ENCODE measurements at regions of chr5 and their contacts with region 1.

Region 1: GRCh38 chr5:42423285-42424165 is at the start of gene GHR:
- DNase-seq: peak; percentile 84 to 88 (median 85)
- ATAC-seq: peak; percentile 95
- H3K4me3 ChIP-seq: peak within 1 kb of the TSS; percentile 23 to 54
- H3K27ac ChIP-seq: peak within 1 kb of the TSS; percentile 21 to 70 (median 46)
- H3K4me1 ChIP-seq: peaks cover 16% of the 10 kb centered on the region
- H3K27me3 ChIP-seq: no peaks in the 10 kb centered on the region
- CTCF ChIP-seq: peak; percentile 45 to 93 (median 80)
- POLR2A ChIP-seq: peak in 1 of 3 donors; percentile 30
- total RNA-seq, gene GHR: 5.7 to 12.9 TPM

Region 2: GRCh38 chr5:42583322-42583721 is 159.8 kb after region 1 on chr5:
- intact Hi-C with region 1: loop called (anchors 5 kb)
- DNase-seq: peak; percentile 65 to 77 (median 68)
- ATAC-seq: peak; percentile 74
- H3K4me3 ChIP-seq: no peak overlapping the region
- H3K27ac ChIP-seq: no peak overlapping the region
- H3K4me1 ChIP-seq: peaks cover 16% of the 10 kb centered on the region
- H3K27me3 ChIP-seq: no peaks in the 10 kb centered on the region
- CTCF ChIP-seq: peak; percentile 57 to 85 (median 80)
- POLR2A ChIP-seq: no peak

Measured in body of pancreas (tissue), 4 donors.